H1 (cell line): ENCODE measurements at regions of chr20 and their contacts with region 1.

Region 1: DNA sequence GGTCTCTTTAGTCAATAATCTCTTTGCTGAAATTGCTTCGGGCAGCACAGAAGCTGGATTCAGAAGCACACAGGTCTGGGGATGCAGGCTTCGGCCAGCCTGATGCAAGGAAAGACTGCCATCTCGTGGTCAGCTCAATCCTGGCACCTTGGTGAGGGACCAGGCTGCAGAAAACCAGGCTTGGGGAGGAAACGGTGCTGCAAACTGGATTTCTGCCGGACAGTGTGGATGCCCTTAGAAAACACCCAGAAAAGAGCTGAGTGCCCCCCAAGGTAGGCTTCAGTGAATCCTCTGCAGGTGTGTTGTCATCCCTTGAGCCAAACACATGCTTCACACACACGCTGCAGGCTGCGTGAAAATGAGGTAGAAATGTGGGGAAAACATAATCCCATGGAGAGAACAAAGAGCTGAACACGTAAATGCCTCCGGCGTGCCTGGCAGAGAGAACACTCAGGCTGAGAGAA is 89.8 kb upstream of the PAX1 start:
- DNase-seq: peak; percentile 34 to 87
- H3K4me3 ChIP-seq: no peak overlapping the region
- H3K27ac ChIP-seq: no peak overlapping the region
- H3K4me1 ChIP-seq: no peaks in the 10 kb centered on the region
- H3K27me3 ChIP-seq: no peaks in the 10 kb centered on the region; a peak in 1 of 7 replicates
- CTCF ChIP-seq: peak; percentile 92 to 96 (median 95)
- EP300 ChIP-seq: no peak
- POLR2A ChIP-seq: no peak
- RAD21 ChIP-seq: peak; percentile 95 to 96

Region 2: GRCh38 chr20:20837574-20838021 is 778.1 kb before region 1 on chr20:
- CTCF ChIA-PET with region 1: interaction called, 20 read pairs
- POLR2A ChIA-PET with region 1: no interaction called
- DNase-seq: peak in 1 of 2 experiments; percentile 78
- H3K4me3 ChIP-seq: no peak overlapping the region
- H3K27ac ChIP-seq: no peak overlapping the region
- H3K4me1 ChIP-seq: no peaks in the 10 kb centered on the region
- H3K27me3 ChIP-seq: no peaks in the 10 kb centered on the region; a peak in 1 of 7 replicates
- CTCF ChIP-seq: peak; percentile 53 to 77 (median 72)
- EP300 ChIP-seq: no peak
- POLR2A ChIP-seq: no peak
- RAD21 ChIP-seq: peak; percentile 83 to 85

Region 3: DNA sequence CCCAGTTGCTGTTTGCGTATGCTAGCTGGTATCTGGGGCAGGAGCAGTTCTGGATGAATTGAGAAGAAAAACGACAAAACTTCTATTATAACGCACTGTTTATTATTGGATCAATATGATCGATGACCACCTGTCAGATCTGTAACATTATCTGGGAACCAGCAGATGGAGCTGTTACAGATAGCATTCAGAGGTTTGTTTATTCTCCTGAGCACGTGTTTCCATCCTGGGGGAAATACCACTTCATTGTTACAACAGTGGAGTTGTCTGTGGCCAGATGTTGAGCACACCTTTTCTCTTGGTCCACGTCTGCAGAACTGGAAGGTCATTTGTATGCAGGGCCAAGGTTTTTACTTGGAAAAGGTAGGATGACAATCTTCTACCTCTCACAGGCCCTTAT is 85.8 kb before region 1 on chr20:
- CTCF ChIA-PET with region 1: interaction called, 56 read pairs
- POLR2A ChIA-PET with region 1: interaction called, 3 read pairs
- DNase-seq: no peak
- H3K4me3 ChIP-seq: no peak overlapping the region
- H3K27ac ChIP-seq: no peak overlapping the region
- H3K4me1 ChIP-seq: peaks cover 0 to 8% (median 0%) of the 10 kb centered on the region in 4 experiments; a peak in 2 of 7 replicates
- H3K27me3 ChIP-seq: peaks cover 9 to 25% (median 15%) of the 10 kb centered on the region in 4 experiments
- CTCF ChIP-seq: peak in 2 of 3 experiments; percentile 51 to 62; a peak in 3 of 4 replicates
- EP300 ChIP-seq: no peak
- POLR2A ChIP-seq: no peak
- RAD21 ChIP-seq: peak; percentile 36 to 51; a peak in 3 of 4 replicates

Region 4: DNA sequence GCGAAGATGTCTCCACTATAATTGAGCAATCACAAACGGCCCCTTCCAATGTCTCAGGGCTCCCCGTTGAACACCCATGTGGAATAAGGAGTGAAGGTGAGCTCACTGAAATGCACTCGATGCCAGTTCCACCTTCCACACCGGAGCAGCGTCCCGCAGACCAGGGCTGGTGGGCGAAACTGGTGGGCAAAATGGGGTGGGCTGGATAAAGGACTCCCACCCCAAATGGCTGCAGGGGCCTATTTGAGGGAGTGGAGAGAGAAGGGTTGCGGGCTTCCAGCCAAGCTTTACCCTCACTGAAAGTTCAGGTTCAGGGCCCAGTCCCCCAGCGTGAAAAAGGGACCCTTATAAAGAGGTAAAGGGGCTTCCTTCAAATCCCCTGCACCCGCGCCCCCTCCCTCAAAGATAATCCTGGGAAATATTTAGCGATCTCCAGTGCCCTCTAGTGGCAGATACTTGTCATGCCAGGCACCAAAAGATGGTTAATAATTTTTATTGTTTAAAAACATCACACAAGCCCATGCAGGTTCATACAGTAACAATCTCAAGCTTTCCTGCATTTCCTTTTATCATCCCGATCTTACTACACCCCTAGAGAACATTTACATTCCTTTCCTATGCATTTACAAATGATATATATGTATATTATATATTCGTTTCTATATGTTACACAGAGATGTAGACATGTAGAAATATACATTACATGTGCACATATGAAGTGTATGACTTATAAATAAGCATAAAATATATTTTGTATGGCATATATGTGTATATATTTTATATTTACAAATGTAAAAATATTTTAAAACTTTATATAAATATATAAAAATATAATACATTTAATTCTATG is 43.6 kb before region 1 on chr20:
- CTCF ChIA-PET with region 1: interaction called, 19 read pairs
- POLR2A ChIA-PET with region 1: no interaction called
- DNase-seq: peak in 1 of 2 experiments; percentile 57
- H3K4me3 ChIP-seq: no peak overlapping the region; a peak in 1 of 8 replicates
- H3K27ac ChIP-seq: no peak overlapping the region
- H3K4me1 ChIP-seq: peaks cover 1 to 22% (median 9%) of the 10 kb centered on the region in 4 experiments
- H3K27me3 ChIP-seq: 0 out of 7 replicates have a peak, but pooled peaks cover 0 to 2% (median 0%) of the 10 kb centered on the region in 4 experiments
- CTCF ChIP-seq: peak; percentile 17 to 72 (median 71)
- EP300 ChIP-seq: no peak
- POLR2A ChIP-seq: no peak
- RAD21 ChIP-seq: peak; percentile 79 to 83

Region 5: DNA sequence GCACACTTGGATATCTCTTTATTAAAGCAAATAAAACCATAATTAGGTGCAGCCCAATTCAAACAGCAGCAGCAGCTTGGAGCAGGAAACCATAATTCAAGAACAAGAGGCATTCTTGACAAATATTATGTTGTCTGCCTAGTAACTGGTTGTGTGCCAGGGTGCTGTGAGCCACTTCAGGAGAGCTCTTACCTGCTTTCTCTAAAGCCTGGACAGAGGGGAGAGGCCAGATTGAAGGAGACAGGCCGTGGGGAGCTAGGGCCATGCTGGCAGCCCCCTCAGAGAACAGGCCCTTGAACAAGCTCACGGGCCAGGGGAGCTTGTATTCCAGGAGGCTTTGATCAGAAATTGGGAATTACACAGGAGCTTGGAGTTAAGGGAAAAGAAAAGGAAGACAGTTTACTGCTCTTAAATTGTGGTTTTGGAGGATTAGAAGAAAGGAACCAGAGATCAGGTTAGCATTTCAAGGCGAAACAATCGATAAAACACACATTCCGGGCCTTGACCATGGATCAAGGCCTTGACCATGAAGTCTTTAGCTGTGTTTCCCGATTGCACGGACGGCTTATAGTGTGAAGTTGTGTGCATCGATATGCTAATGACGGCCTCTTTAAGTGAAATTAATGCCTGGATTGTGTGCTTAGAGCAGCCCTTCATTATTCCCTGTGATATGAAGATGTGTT is 32.0 kb before region 1 on chr20:
- CTCF ChIA-PET with region 1: interaction called, 17 read pairs
- POLR2A ChIA-PET with region 1: no interaction called
- DNase-seq: no peak
- H3K4me3 ChIP-seq: no peak overlapping the region
- H3K27ac ChIP-seq: no peak overlapping the region
- H3K4me1 ChIP-seq: no peaks in the 10 kb centered on the region
- H3K27me3 ChIP-seq: peaks cover 0 to 1% (median 0%) of the 10 kb centered on the region in 4 experiments; a peak in 1 of 7 replicates
- CTCF ChIP-seq: no peak
- EP300 ChIP-seq: no peak
- POLR2A ChIP-seq: no peak
- RAD21 ChIP-seq: no peak